Ascending aorta (tissue), 2 donors: ENCODE measurements at regions of chr15 and their contacts with region 1.

Region 1: DNA sequence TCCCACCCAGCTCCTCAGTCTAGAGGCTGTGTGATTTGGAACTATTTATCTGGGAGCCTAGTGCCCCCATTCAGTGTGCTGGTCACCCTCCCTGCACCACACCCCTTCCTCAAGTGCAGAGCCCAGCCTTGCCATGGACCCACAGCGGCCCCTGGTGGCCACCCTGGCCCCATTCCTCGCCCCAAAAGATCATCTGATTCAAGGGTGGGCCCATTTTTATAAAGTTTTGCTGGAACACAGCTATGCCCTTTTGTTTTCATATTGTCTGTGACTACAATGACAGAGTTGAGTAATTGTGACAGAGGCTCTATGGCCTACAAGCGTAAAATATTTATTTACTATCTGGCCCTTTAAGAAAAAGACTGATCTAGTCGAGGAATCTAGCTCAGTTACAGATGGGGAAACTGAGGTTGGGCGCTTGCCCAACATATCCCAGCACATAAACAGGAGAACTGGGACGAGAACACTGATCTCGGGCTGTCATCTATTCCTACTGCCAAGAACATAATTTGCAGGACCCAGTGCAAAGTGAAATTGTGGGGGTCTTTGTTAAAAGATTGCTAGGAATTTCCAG is 1.8 kb downstream of the FES start:
- DNase-seq: peak in 1 of 2 donors; percentile 85
- H3K4me3 ChIP-seq: peak overlapping the region; percentile 8 to 75
- H3K27ac ChIP-seq: peak overlapping the region; percentile 90 to 94
- H3K4me1 ChIP-seq: peaks cover 10 to 30% of the 10 kb centered on the region in 2 donors
- H3K27me3 ChIP-seq: no peaks in the 10 kb centered on the region
- CTCF ChIP-seq: peak; percentile 96 to 99 (median 98)

Region 2: GRCh38 chr15:90320061-90320884 is 565.9 kb before region 1 on chr15:
- intact Hi-C with region 1: loop called (anchors 10 kb)
- DNase-seq: peak; percentile 36 to 93
- H3K4me3 ChIP-seq: peak overlapping the region in 1 of 2 donors; percentile 38
- H3K27ac ChIP-seq: peak overlapping the region; percentile 44 to 65
- H3K4me1 ChIP-seq: peaks cover 8 to 10% of the 10 kb centered on the region in 2 donors
- H3K27me3 ChIP-seq: no peaks in the 10 kb centered on the region
- CTCF ChIP-seq: peak; percentile 97 to 98 (median 98)

Region 3: GRCh38 chr15:90648137-90649070 is 237.7 kb before region 1 on chr15:
- intact Hi-C with region 1: loop called (anchors 1 kb)
- DNase-seq: peak; percentile 60 to 89
- H3K4me3 ChIP-seq: no peak overlapping the region
- H3K27ac ChIP-seq: peak overlapping the region in 1 of 2 donors; percentile 60
- H3K4me1 ChIP-seq: peaks cover 0 to 15% of the 10 kb centered on the region in 2 donors
- H3K27me3 ChIP-seq: no peaks in the 10 kb centered on the region
- CTCF ChIP-seq: peak; percentile 86 to 96 (median 88)

Region 4: GRCh38 chr15:90716976-90717821 is 168.9 kb before region 1 on chr15 and contains the start of gene BLM:
- intact Hi-C with region 1: loop called (anchors 2 kb)
- DNase-seq: peak; percentile 92 to 98
- H3K4me3 ChIP-seq: peak within 1 kb of the TSS; percentile 69
- H3K27ac ChIP-seq: peak within 1 kb of the TSS; percentile 89 to 91
- H3K4me1 ChIP-seq: peaks cover 6 to 7% of the 10 kb centered on the region in 2 donors
- H3K27me3 ChIP-seq: no peaks in the 10 kb centered on the region
- CTCF ChIP-seq: peak in 2 of 3 experiments; percentile 38 to 70
- total RNA-seq, gene BLM: 0.11 TPM